ENCODE measurements at regions of chr11 and their contacts with region 1.

Region 1: DNA sequence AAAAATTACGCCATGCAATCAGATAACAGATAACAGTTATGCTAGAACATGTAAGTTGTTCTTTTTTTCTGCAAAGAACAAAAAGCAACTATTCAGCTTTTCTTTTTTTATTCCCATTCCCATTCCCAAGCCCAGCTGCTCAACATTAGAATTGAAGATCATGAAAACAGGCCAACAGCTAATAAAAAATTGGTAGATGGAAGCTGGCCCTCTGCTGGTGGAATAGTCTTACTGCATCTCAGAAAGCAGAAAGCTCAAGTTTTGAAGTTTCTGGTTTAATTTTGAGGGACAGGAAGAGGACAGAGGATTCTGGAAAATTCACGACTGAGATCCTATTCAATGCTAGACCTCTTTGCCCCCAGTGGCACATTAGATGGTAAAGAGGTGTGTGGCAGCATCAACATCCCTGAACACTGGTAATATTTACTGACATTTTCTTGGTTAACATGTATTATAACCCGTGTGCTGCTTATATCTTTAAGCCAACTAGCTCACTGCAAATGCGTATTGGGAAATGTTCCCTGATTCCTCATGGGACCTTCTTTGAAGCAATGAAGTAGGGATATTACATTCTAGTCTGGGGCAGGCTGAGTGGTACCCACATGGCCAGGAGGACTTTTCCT is 591.2 kb downstream of the OPCML start:
- DNase-seq: peak in 2 of 9 experiments; percentile 5 to 25
- ATAC-seq: no peak
- H3K4me3 ChIP-seq: no peak overlapping the region
- H3K4me3 Mint-ChIP-seq: no peak overlapping the region
- H3K27ac ChIP-seq: no peak overlapping the region
- H3K27ac Mint-ChIP-seq: no peak overlapping the region
- H3K4me1 ChIP-seq: no peaks in the 10 kb centered on the region
- H3K4me1 Mint-ChIP-seq: peaks cover 3% of the 10 kb centered on the region
- H3K27me3 ChIP-seq: peaks cover 0 to 7% of the 10 kb centered on the region in 2 experiments
- H3K27me3 Mint-ChIP-seq: peaks cover 27% of the 10 kb centered on the region
- CTCF ChIP-seq: peak; percentile 87

Region 2: DNA sequence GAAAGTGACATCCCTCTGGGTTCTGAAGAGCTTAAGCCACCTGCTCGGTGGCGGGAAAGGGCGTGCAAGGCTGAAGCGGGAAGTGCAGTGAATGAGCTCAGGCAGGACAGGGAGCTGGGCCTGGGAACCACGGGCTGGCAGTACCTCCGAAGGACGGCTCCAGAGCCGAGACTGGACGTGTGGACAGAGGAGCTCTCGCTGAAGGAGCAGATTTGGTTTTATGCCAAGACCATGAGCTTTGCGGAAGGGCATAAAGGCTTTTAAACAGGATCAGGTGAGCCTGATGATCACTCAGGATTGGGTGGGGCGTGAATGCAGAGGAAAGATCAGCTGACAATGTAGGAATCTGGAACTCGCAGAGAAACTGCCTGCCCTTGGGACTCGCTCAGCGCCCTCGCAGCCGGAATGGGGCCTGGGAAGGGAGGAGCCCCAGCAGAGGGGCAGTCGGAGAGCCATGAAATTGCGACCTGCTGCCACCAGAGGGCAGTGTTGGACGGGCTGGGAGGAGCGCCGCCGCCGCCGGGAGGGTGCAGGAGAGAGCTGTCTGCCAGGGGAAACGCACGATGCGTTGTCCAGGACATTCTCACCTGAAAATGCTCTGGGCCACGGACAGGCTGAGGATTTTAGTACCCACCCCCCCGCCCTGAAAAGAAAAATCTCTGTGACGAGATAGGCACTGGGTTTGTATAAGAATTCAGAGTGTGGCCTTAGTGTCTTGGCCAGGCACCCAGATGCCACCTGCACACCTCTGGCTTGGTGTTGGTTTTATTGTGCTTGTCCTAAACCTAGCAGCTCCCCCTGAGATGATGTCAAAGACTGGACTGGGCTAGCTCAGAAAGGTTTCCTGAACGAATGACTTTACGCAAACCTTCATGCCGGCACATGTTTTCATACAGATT is 1246.4 kb before region 1 on chr11:
- CTCF ChIA-PET with region 1: no interaction called
- POLR2A ChIA-PET with region 1: no interaction called
- intact Hi-C with region 1: loop called in 1 of 2 experiments (anchors 5 kb)
- DNase-seq: peak in 6 of 9 experiments; percentile 26 to 50 (median 37)
- ATAC-seq: no peak
- H3K4me3 ChIP-seq: no peak overlapping the region
- H3K4me3 Mint-ChIP-seq: no peak overlapping the region
- H3K27ac ChIP-seq: no peak overlapping the region
- H3K27ac Mint-ChIP-seq: no peak overlapping the region
- H3K4me1 ChIP-seq: no peaks in the 10 kb centered on the region
- H3K4me1 Mint-ChIP-seq: peaks cover 3% of the 10 kb centered on the region
- H3K27me3 ChIP-seq: no peaks in the 10 kb centered on the region
- H3K27me3 Mint-ChIP-seq: peaks cover 43% of the 10 kb centered on the region
- CTCF ChIP-seq: peak; percentile 53

Region 3: DNA sequence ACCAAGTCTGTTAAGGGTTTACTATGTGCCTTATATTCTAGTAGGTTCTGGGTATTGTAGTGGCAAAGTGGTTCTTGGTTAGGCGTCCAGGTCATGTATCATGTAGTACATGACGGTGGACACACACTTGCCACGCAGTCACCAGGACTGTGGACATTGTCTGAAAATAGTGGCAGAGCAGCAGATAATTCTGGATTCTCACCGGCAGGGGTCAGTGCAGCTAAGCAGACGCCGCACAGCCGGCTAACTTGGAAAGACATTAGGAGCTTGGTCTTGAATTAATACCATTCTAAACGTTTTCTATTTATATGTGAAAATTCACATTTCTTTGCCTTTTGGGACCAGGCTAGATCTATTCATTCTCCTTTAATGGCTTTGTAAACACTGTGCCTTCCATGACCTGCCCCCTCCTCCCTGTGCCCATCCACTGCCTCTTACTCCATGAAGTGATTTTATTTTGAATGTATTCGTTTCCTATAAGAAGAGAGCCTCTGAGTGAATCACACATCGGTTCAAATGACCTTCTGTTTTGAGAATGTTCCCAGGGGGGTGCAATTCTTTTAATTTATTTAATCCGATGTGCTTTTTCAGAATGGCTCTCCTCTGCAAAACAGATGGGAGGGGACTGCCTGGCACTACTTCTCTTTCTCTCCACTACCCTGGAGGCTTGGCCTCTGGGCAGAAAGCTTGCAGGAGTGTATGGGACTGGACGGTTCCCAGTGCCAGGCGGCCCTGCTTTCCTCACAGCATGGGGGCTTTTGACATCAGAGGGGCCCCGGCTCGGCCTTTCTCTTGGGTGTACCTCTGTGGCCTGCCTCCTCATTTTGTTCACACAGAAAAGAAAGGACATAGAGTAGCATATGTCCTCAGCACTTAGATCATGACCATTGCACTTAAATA is 1192.7 kb before region 1 on chr11:
- CTCF ChIA-PET with region 1: no interaction called
- POLR2A ChIA-PET with region 1: no interaction called
- intact Hi-C with region 1: loop called (anchors 2 to 5 kb)
- DNase-seq: peak in 4 of 9 experiments; percentile 4 to 22 (median 13)
- ATAC-seq: no peak
- H3K4me3 ChIP-seq: no peak overlapping the region
- H3K4me3 Mint-ChIP-seq: no peak overlapping the region
- H3K27ac ChIP-seq: no peak overlapping the region
- H3K27ac Mint-ChIP-seq: no peak overlapping the region
- H3K4me1 ChIP-seq: no peaks in the 10 kb centered on the region
- H3K4me1 Mint-ChIP-seq: no peaks in the 10 kb centered on the region
- H3K27me3 ChIP-seq: no peaks in the 10 kb centered on the region
- H3K27me3 Mint-ChIP-seq: no peaks in the 10 kb centered on the region
- CTCF ChIP-seq: peak; percentile 35

Region 4: GRCh38 chr11:132278801-132279574 is 662.1 kb before region 1 on chr11:
- CTCF ChIA-PET with region 1: interaction called, 4 read pairs
- POLR2A ChIA-PET with region 1: no interaction called
- intact Hi-C with region 1: loop called (anchors 1 to 5 kb)
- DNase-seq: peak in 2 of 9 experiments; percentile 3 to 8
- ATAC-seq: no peak
- H3K4me3 ChIP-seq: no peak overlapping the region
- H3K4me3 Mint-ChIP-seq: no peak overlapping the region
- H3K27ac ChIP-seq: no peak overlapping the region
- H3K27ac Mint-ChIP-seq: no peak overlapping the region
- H3K4me1 ChIP-seq: no peaks in the 10 kb centered on the region
- H3K4me1 Mint-ChIP-seq: no peaks in the 10 kb centered on the region
- H3K27me3 ChIP-seq: no peaks in the 10 kb centered on the region
- H3K27me3 Mint-ChIP-seq: peaks cover 3% of the 10 kb centered on the region
- CTCF ChIP-seq: no peak

Region 5: GRCh38 chr11:132472411-132473172 is 468.5 kb before region 1 on chr11:
- CTCF ChIA-PET with region 1: interaction called, 5 read pairs
- POLR2A ChIA-PET with region 1: no interaction called
- intact Hi-C with region 1: loop called in 1 of 2 experiments (anchors 5 kb)
- DNase-seq: no peak
- ATAC-seq: no peak
- H3K4me3 ChIP-seq: no peak overlapping the region
- H3K4me3 Mint-ChIP-seq: no peak overlapping the region
- H3K27ac ChIP-seq: no peak overlapping the region
- H3K27ac Mint-ChIP-seq: no peak overlapping the region
- H3K4me1 ChIP-seq: no peaks in the 10 kb centered on the region
- H3K4me1 Mint-ChIP-seq: no peaks in the 10 kb centered on the region
- H3K27me3 ChIP-seq: no peaks in the 10 kb centered on the region
- H3K27me3 Mint-ChIP-seq: peaks cover 3% of the 10 kb centered on the region
- CTCF ChIP-seq: no peak

Region 6: GRCh38 chr11:132803436-132803835 is 137.7 kb before region 1 on chr11:
- CTCF ChIA-PET with region 1: no interaction called
- POLR2A ChIA-PET with region 1: no interaction called
- intact Hi-C with region 1: no loop called
- DNase-seq: no peak
- ATAC-seq: no peak
- H3K4me3 ChIP-seq: no peak overlapping the region
- H3K4me3 Mint-ChIP-seq: no peak overlapping the region
- H3K27ac ChIP-seq: no peak overlapping the region
- H3K27ac Mint-ChIP-seq: no peak overlapping the region
- H3K4me1 ChIP-seq: no peaks in the 10 kb centered on the region
- H3K4me1 Mint-ChIP-seq: no peaks in the 10 kb centered on the region
- H3K27me3 ChIP-seq: no peaks in the 10 kb centered on the region
- H3K27me3 Mint-ChIP-seq: peaks cover 7% of the 10 kb centered on the region
- CTCF ChIP-seq: no peak

Region 7: DNA sequence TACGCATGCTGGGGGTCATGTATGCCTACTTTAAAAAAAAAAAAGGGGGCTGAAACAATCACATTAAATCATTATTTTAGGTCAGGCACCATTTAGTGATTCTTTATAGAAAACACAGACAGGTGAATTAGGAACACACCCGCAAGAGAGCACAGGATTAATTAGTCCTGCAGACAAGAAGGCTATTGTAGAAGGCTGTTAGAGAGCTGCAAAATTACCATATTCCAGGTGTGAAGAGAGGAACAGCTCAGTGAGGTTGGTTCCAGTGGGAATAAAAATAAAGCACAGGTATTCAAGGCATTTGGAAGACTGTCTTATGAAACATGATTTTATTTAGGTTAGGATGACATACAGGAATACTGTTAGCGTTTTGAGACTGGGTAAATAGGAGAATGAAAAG is 57.9 kb before region 1 on chr11:
- CTCF ChIA-PET with region 1: no interaction called
- POLR2A ChIA-PET with region 1: no interaction called
- intact Hi-C with region 1: no loop called
- DNase-seq: no peak
- ATAC-seq: no peak
- H3K4me3 ChIP-seq: no peak overlapping the region
- H3K4me3 Mint-ChIP-seq: no peak overlapping the region
- H3K27ac ChIP-seq: no peak overlapping the region
- H3K27ac Mint-ChIP-seq: no peak overlapping the region
- H3K4me1 ChIP-seq: no peaks in the 10 kb centered on the region
- H3K4me1 Mint-ChIP-seq: no peaks in the 10 kb centered on the region
- H3K27me3 ChIP-seq: no peaks in the 10 kb centered on the region
- H3K27me3 Mint-ChIP-seq: no peaks in the 10 kb centered on the region
- CTCF ChIP-seq: no peak

Region 8: GRCh38 chr11:133311230-133311629 is 370.1 kb after region 1 on chr11:
- CTCF ChIA-PET with region 1: no interaction called
- POLR2A ChIA-PET with region 1: no interaction called
- intact Hi-C with region 1: no loop called
- DNase-seq: no peak
- ATAC-seq: no peak
- H3K4me3 ChIP-seq: no peak overlapping the region
- H3K4me3 Mint-ChIP-seq: no peak overlapping the region
- H3K27ac ChIP-seq: no peak overlapping the region
- H3K27ac Mint-ChIP-seq: no peak overlapping the region
- H3K4me1 ChIP-seq: no peaks in the 10 kb centered on the region
- H3K4me1 Mint-ChIP-seq: no peaks in the 10 kb centered on the region
- H3K27me3 ChIP-seq: no peaks in the 10 kb centered on the region
- H3K27me3 Mint-ChIP-seq: no peaks in the 10 kb centered on the region
- CTCF ChIP-seq: no peak